Endothelial cell of umbilical vein (primary cell): ENCODE measurements at regions of chr12 and their contacts with region 1.

Region 1: DNA sequence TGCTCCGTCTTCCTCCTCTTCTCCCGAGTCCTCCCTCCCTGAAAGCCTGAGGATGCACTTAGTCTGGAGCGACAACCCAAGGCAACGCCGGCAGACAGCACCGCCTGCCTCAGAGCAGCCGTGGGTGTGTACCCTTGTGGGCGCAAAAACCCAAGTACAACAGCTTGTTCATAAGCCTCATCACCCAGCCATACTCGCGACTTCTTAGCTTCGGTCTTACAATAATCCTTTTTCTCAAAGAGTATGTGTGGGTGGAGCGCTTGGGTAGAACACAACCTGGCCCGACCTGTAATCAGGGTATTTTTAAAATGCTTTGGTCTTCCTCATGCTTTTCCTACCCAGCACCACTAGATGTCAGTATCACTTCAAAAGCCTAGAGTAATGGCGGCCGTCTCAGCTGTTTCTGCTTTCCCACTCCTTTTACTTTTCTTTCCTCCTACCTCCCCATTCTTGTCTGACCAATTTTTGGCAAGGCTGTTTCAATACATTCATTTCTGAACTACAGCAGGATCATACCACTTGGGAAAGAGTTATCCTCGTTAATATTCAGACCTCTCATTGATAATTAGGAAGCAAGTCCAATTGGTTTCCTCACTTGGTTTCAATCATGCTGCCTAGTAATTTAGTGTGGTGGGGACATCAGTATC is 198.9 kb downstream of the EPS8 start:
- DNase-seq: peak; percentile 70
- H3K4me3 ChIP-seq: peak overlapping the region in 2 of 3 experiments; percentile 24 to 32
- H3K27ac ChIP-seq: no peak overlapping the region
- H3K4me1 ChIP-seq: peaks cover 6% of the 10 kb centered on the region
- H3K27me3 ChIP-seq: peaks cover 5 to 11% of the 10 kb centered on the region in 2 experiments
- CTCF ChIP-seq: peak; percentile 79 to 80
- POLR2A ChIP-seq: no peak

Region 2: GRCh38 chr12:15488481-15488880 is 101.8 kb before region 1 on chr12:
- CTCF ChIA-PET with region 1: no interaction called
- POLR2A ChIA-PET with region 1: no interaction called
- dilution Hi-C with region 1: no loop called
- intact Hi-C with region 1: no loop called
- DNase-seq: no peak
- H3K4me3 ChIP-seq: no peak overlapping the region
- H3K27ac ChIP-seq: no peak overlapping the region
- H3K4me1 ChIP-seq: no peaks in the 10 kb centered on the region
- H3K27me3 ChIP-seq: no peaks in the 10 kb centered on the region
- CTCF ChIP-seq: no peak
- POLR2A ChIP-seq: no peak

Region 3: GRCh38 chr12:15772405-15773018 is 182.2 kb after region 1 on chr12:
- CTCF ChIA-PET with region 1: interaction called, 5 read pairs
- POLR2A ChIA-PET with region 1: no interaction called
- dilution Hi-C with region 1: no loop called
- intact Hi-C with region 1: loop called (anchors 1 kb)
- DNase-seq: peak; percentile 29
- H3K4me3 ChIP-seq: no peak overlapping the region
- H3K27ac ChIP-seq: no peak overlapping the region
- H3K4me1 ChIP-seq: no peaks in the 10 kb centered on the region
- H3K27me3 ChIP-seq: no peaks in the 10 kb centered on the region
- CTCF ChIP-seq: peak; percentile 22 to 44
- POLR2A ChIP-seq: no peak

Region 4: DNA sequence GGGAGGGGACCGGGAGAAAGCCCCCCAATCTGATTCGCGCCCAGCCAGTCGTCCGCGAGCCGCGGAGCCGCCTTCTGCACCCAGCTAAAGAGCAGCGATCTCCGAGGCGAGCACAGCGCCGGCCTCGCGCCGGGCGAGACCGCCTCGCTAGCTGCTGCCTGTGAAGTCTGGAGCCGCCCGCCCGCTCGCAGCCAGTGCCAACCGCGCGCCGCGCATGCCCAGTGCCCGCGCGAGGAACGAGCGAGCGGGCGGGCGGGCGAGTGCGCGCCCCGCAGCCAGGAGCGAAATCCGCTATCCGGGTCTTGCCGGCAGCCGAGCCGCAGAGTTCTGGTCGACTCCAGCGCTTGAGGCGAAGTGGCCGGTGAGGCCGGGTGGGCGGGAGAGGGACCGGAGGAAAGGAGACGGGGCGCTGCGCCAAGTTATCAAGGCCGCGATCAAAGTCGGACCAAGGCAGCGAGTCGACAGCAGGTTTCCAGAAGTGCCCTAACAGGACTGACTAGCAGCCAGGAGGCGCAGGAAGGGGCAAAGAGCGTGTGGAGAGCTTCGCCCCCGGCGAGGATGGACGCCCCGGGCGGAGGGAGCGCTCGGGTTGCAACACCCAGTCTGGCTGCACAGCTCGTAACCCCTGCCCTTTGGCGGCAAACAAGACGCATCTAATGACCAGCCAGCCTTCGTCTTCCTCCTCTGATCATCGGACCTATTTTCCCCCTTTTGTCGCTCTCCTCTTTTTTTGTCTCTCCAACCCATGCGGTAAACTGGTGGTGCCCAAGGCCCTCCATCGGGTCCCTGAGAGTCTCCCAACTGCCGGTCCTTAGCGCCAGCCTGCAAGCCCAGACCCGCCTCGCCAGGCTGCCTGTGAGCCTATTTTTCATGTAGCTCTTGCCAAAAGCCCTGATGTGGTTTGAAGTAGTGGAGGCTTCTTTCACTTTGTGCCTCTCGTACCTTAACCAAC is 199.2 kb after region 1 on chr12 and contains the start of gene EPS8:
- CTCF ChIA-PET with region 1: no interaction called
- POLR2A ChIA-PET with region 1: no interaction called
- dilution Hi-C with region 1: no loop called
- intact Hi-C with region 1: loop called (anchors 1 kb)
- DNase-seq: peak; percentile 94
- H3K4me3 ChIP-seq: peak within 1 kb of the TSS; percentile 49 to 83 (median 83)
- H3K27ac ChIP-seq: peak within 1 kb of the TSS; percentile 52
- H3K4me1 ChIP-seq: peaks cover 13% of the 10 kb centered on the region
- H3K27me3 ChIP-seq: no peaks in the 10 kb centered on the region
- CTCF ChIP-seq: no peak
- POLR2A ChIP-seq: peak; percentile 59
- total RNA-seq, gene EPS8: 11.9 and 12.1 TPM in 2 replicates

Region 5: DNA sequence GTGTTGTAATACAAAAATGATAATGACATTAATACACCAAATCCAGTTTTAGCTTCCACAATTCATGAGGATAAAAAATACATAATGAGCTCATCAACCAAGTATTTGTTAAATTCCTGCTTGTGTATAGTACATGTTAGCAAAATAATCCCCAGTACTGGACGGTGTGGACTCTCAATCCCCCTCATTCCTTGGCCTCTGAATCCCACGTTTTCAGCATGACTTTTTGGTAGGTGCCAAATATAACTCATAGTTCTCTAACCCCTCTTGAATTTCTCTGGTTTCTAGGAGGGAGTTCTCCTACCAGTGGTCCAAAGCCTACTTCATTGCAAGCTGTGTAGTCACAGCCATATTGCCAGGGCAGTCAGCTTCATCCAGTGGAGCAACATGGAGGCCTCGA is 240.2 kb after region 1 on chr12:
- CTCF ChIA-PET with region 1: interaction called, 12 read pairs
- POLR2A ChIA-PET with region 1: no interaction called
- dilution Hi-C with region 1: no loop called
- intact Hi-C with region 1: no loop called
- DNase-seq: no peak
- H3K4me3 ChIP-seq: no peak overlapping the region
- H3K27ac ChIP-seq: no peak overlapping the region
- H3K4me1 ChIP-seq: no peaks in the 10 kb centered on the region
- H3K27me3 ChIP-seq: no peaks in the 10 kb centered on the region
- CTCF ChIP-seq: no peak
- POLR2A ChIP-seq: no peak

Region 6: DNA sequence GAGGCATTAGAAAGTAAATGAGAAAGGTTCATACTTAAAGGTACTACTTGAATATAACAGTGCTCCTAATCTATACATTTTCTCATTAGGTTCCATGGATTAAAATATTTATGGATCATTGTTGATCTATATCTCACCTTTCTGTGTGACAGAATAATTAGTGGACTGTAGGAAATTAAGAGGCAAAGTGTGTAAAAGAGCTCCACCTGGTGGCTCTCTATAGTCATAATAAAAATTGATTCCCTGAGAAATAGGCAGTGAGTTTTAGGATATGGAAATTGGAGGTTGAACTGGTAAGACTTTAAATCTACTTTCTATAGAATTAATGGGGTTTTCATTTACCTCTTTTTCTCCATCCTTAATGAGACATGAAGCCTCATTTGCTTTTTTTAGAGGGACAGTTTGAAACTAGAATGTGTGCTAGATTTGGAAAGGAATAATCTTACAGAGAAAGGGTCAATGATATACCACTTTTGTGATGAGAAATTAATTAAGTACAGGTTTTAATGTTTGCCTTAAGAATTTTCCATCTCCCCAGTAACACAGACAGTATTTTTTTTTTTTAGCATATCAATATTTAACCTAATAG is 309.1 kb after region 1 on chr12:
- CTCF ChIA-PET with region 1: interaction called, 10 read pairs
- POLR2A ChIA-PET with region 1: no interaction called
- dilution Hi-C with region 1: no loop called
- intact Hi-C with region 1: loop called (anchors 1 kb)
- DNase-seq: peak; percentile 54
- H3K4me3 ChIP-seq: no peak overlapping the region
- H3K27ac ChIP-seq: no peak overlapping the region
- H3K4me1 ChIP-seq: peaks cover 3% of the 10 kb centered on the region
- H3K27me3 ChIP-seq: no peaks in the 10 kb centered on the region
- CTCF ChIP-seq: peak; percentile 44 to 45
- POLR2A ChIP-seq: no peak